Right ventricle myocardium inferior (tissue), 1 donor: ENCODE measurements at regions of chr6 and their contacts with region 1.

Region 1: GRCh38 chr6:26156076-26156849 is 69.0 kb downstream of the HFE start:
- DNase-seq: peak; percentile 96
- ATAC-seq: peak; percentile 90

Region 2: DNA sequence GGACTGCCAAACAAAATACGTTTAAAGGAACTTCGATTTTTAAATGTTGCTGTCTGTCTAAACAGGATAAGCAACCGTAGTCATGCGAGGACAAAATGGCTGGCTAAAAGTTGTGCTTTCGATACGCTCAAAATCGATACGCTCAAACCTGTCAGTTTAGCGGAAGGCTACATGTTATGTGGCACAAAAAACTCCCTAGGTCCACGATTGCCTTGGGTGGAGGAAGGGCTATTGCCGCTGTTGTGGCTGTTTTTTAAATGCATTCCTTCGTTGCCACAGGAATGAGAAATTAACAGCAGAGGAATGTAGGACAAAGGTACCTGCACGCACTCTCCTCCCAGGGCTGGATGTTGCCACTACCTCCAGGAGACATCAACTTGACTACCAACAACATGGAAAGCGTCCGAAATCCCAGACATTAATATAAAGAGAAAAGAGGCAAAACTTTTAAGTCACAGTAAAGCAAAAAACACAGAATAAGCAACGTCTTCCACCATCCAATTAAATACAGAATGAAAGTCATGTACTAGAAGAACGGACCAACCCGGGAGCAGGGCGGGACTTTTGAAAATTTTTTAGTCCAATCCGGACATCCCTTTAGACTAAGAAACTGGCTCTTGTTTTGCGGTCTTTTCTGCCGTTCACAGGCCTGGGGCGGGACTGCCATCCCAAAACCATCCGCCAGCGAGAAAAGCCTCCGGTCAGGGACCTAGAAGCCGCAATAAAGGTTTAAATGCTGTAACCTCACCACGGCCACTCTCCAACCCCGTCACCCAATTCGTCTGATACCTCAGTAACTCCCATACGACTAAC is 101.2 kb before region 1 on chr6:
- intact Hi-C with region 1: loop called (anchors 1 kb)
- DNase-seq: peak; percentile 85
- ATAC-seq: peak; percentile 91

Region 3: GRCh38 chr6:26172496-26172958 is 16.3 kb after region 1 on chr6:
- intact Hi-C with region 1: loop called (anchors 2 kb)
- DNase-seq: no peak
- ATAC-seq: peak; percentile 41

Region 4: DNA sequence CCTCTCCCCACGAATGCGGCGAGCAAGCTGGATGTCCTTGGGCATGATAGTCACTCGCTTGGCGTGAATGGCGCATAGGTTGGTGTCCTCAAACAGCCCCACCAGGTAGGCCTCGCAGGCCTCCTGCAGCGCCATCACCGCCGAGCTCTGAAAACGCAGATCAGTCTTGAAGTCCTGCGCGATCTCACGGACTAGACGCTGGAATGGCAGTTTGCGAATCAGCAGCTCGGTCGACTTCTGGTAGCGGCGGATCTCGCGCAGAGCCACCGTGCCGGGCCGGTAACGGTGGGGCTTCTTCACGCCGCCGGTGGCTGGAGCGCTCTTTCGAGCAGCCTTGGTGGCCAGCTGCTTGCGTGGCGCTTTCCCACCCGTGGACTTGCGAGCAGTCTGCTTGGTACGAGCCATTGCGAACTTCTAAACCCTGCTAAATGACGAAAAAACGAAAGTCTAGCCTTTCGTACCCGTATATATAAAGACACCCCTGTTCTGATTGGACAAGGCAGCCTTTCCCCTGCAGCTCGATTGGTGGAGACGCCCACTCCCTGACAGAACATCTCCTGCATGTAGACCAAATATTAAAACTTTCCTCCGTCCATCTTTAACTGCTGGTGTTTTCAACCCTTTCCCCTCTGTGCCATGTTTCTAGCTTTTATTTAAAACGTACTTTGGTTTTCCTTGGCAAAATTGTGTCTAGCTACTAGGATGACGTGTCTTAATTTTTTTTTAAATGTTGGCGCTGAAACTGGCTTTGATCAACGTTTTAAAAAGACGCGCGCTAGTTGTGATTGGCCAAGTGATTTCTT is 40.8 kb after region 1 on chr6:
- intact Hi-C with region 1: loop called (anchors 5 kb)
- DNase-seq: peak; percentile 70
- ATAC-seq: peak; percentile 60

Region 5: GRCh38 chr6:26240154-26241032 is 84.1 kb after region 1 on chr6:
- intact Hi-C with region 1: no loop called
- DNase-seq: peak; percentile 78
- ATAC-seq: peak; percentile 68

Region 6: DNA sequence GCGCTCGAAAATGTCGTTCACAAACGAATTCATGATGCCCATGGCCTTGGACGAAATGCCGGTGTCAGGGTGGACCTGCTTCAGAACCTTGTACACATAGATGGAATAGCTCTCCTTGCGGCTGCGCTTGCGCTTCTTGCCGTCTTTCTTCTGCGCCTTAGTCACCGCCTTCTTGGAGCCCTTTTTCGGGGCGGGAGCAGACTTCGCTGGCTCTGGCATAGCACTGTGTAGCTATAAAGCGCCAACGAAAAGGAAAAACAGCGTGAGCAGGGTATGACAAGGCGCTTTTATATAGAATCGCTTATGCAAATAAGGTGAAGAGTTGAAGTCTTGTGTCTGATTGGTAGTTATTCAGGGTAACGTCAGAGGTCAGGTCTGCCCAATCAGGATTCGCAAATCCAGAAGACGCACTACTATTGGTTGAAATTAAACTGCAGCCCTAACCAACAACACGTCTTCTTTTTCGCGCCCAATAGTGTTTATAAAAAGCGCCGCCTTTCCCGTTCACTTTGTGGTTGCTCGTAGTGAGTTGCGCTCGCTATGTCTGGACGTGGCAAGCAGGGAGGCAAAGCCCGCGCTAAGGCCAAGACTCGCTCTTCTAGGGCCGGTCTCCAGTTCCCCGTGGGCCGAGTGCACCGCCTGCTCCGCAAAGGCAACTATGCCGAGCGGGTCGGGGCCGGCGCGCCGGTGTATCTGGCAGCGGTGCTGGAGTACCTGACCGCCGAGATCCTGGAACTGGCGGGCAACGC is 976.4 kb after region 1 on chr6:
- intact Hi-C with region 1: loop called (anchors 5 kb)
- DNase-seq: peak; percentile 87
- ATAC-seq: peak; percentile 96